GM12878 (cell line): ENCODE measurements at regions of chr6 and their contacts with region 1.

Region 1: DNA sequence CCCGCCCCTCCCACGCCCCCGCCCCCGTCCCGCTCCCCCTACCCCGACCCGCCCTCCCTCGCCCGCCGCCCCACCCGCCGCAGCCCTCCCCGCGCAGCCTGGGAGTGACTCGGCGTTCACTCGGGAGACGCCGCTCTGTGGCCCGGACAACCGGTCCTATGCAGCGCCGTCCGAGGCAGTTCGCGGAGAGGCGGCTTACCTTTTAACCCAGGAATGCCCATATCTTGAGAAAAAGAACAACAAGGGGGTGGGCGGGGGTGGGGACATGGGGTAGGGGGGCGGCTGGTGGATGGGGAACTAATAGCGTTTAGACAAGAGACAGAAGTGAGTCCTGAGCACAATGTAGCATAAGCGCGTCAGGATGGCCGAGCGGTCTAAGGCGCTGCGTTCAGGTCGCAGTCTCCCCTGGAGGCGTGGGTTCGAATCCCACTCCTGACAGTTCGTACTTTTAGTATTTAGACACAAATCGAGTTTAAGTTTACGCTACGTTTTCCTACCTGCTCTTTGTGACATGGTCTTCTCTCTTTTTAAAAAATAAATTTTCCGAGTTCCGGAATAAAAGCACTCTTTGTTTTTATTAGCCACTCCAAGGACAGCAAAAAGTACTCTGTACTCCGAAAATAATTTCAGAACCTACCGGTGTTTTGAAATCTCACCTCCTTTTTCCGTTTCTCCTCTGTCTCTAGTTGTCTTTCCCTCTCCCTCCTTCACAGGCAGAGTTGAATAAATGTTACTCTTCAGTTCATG is 17.1 kb upstream of the HMGN4 start:
- DNase-seq: no peak
- ATAC-seq: peak; percentile 84
- H3K4me3 ChIP-seq: peak overlapping the region; percentile 57
- H3K27ac ChIP-seq: peak overlapping the region; percentile 88
- H3K4me1 ChIP-seq: peaks cover 6% of the 10 kb centered on the region
- H3K27me3 ChIP-seq: no peaks in the 10 kb centered on the region
- CTCF ChIP-seq: no peak
- EP300 ChIP-seq: peak in 1 of 2 experiments; percentile 64; a peak in 1 of 4 replicates
- POLR2A ChIP-seq: peak; percentile 77
- RAD21 ChIP-seq: no peak

Region 2: DNA sequence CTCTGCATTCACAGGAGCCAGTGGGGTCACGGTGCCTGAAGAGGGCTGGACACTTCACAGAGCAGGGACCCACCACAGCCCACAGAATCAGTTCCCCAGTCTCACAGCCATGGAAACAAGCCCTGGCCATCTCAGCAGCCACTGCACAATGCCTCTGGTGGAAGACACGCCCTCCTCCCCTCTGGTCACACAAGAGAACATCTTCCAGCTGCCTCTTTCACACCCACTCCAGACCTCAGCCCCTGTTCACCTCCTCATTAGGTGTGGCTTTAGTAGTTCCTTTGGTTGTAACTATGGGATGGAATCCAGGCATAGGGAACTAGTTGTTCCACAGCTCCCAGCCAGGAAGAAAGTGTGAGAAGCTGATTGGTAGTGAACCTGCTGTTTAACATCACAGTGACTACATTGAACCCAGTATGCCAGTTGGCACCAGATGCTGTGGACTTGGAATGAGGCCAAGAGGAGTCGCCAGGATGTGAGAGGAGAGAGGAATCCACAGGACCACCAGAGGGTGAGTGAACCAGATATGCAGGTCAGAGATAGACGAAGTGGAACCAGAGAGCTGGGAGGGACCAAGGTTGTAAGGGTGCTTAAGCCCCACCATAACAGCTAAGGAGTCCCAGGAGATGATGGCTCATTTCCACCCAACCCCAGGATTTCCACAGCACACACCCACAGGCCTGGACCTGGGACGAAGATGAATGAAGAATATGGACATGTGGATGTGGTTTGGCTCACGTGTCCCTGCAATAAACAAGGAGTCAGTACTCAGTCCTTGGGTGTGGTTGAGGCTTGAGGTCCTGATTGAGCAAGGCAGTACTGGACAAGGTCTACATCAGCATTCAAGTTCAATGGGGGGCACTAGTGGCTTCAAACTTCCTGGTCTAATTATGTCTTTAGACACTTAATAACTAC is 89.5 kb before region 1 on chr6:
- CTCF ChIA-PET with region 1: no interaction called
- POLR2A ChIA-PET with region 1: no interaction called
- RAD21 ChIA-PET with region 1: no interaction called
- SMC1A ChIA-PET with region 1: no interaction called
- in situ Hi-C with region 1: no loop called
- intact Hi-C with region 1: no loop called
- DNase-seq: no peak
- ATAC-seq: no peak
- H3K4me3 ChIP-seq: no peak overlapping the region
- H3K27ac ChIP-seq: no peak overlapping the region
- H3K4me1 ChIP-seq: no peaks in the 10 kb centered on the region
- H3K27me3 ChIP-seq: no peaks in the 10 kb centered on the region
- CTCF ChIP-seq: no peak
- EP300 ChIP-seq: no peak
- POLR2A ChIP-seq: no peak
- RAD21 ChIP-seq: no peak

Region 3: DNA sequence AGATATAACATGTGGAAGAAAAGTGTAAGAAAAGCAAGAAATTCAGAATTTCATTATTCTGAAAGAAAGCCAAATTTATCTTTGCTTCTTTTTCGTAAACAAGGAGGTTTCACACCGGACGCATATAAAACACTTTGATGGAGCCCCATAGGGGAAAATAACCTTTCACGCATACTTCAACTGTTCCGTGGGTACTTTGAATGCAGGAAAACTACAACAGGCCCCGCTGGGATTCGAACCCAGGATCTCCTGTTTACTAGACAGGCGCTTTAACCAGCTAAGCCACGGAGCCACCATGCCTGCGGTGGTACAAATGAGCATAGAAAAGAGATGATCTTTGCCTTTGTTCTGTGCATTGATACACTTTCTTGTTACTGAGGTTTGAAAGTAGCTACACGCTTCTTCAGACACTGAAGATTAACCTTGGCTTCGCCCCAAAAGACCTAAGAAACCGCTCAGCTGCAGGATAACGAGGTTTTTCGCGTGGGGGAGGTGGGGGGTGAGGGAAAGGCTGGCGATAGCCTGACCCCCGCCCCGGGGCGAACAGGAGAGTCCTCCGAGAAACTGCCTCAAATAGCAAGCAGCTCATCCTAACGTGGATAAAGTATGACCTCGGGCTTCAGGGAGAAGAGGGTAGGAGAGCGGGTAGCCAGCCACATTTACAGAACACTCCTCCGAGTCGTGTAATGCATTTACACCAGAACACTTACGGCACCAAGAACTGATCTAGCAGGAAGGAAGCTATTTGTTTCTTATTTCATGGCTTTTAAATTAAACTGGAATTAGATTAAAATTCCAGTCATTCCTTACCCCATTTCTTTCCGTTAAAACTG is 11.9 kb after region 1 on chr6:
- CTCF ChIA-PET with region 1: interaction called, 5 read pairs
- POLR2A ChIA-PET with region 1: interaction called, 16 read pairs
- RAD21 ChIA-PET with region 1: interaction called, 9 read pairs
- SMC1A ChIA-PET with region 1: interaction called, 14 read pairs
- in situ Hi-C with region 1: no loop called
- intact Hi-C with region 1: loop called (anchors 1 kb)
- DNase-seq: peak; percentile 99
- ATAC-seq: peak; percentile 59
- H3K4me3 ChIP-seq: peak overlapping the region; percentile 79
- H3K27ac ChIP-seq: peak overlapping the region; percentile 73
- H3K4me1 ChIP-seq: peaks cover 17% of the 10 kb centered on the region
- H3K27me3 ChIP-seq: no peaks in the 10 kb centered on the region
- CTCF ChIP-seq: no peak
- EP300 ChIP-seq: peak in 1 of 2 experiments; percentile 55; a peak in 1 of 4 replicates
- POLR2A ChIP-seq: no peak
- RAD21 ChIP-seq: no peak

Region 4: GRCh38 chr6:26537846-26538571 is 17.0 kb after region 1 on chr6 and contains the start of gene HMGN4:
- CTCF ChIA-PET with region 1: interaction called, 5 read pairs
- POLR2A ChIA-PET with region 1: interaction called, 16 read pairs
- RAD21 ChIA-PET with region 1: interaction called, 9 read pairs
- SMC1A ChIA-PET with region 1: interaction called, 14 read pairs
- in situ Hi-C with region 1: no loop called
- intact Hi-C with region 1: loop called (anchors 1 kb)
- DNase-seq: peak; percentile 96
- ATAC-seq: peak; percentile 81
- H3K4me3 ChIP-seq: peak within 1 kb of the TSS; percentile 86
- H3K27ac ChIP-seq: peak within 1 kb of the TSS; percentile 99
- H3K4me1 ChIP-seq: peaks cover 14% of the 10 kb centered on the region
- H3K27me3 ChIP-seq: no peaks in the 10 kb centered on the region
- CTCF ChIP-seq: 0 out of 6 replicates have a peak, but pooled peaks of 1 of the 3 experiments have one; percentile 8
- EP300 ChIP-seq: peak in 1 of 2 experiments; percentile 74; a peak in 1 of 4 replicates
- POLR2A ChIP-seq: peak; percentile 84
- RAD21 ChIP-seq: no peak
- polyA plus RNA-seq, gene HMGN4: 26.7 to 31.2 TPM